Activated CD8-positive, alpha-beta memory T cell treated with anti-CD3 and anti-CD28 coated beads, Interleukin-2, amount 10 ng/mL, durations not matched to agents 7 days and 5 days (primary cell): ENCODE measurements at regions of chr14 and their contacts with region 1.

Region 1: GRCh38 chr14:68843471-68844209 is 50.8 kb upstream of the ZFP36L1 start:
- DNase-seq: peak; percentile 81
- ATAC-seq: peak; percentile 89
- H3K4me3 Mint-ChIP-seq: no peak overlapping the region
- H3K27ac Mint-ChIP-seq: no peak overlapping the region
- H3K4me1 Mint-ChIP-seq: peaks cover 15% of the 10 kb centered on the region
- H3K27me3 Mint-ChIP-seq: peaks cover 13% of the 10 kb centered on the region

Region 2: GRCh38 chr14:67934008-67934481 is 909.6 kb before region 1 on chr14:
- CTCF ChIA-PET with region 1: interaction called, 12 read pairs
- DNase-seq: no peak
- ATAC-seq: peak; percentile 70
- H3K4me3 Mint-ChIP-seq: no peak overlapping the region
- H3K27ac Mint-ChIP-seq: no peak overlapping the region
- H3K4me1 Mint-ChIP-seq: peaks cover 2% of the 10 kb centered on the region
- H3K27me3 Mint-ChIP-seq: no peaks in the 10 kb centered on the region

Region 3: GRCh38 chr14:68248481-68249255 is 595.0 kb before region 1 on chr14:
- CTCF ChIA-PET with region 1: interaction called, 21 read pairs
- DNase-seq: no peak
- ATAC-seq: peak; percentile 36
- H3K4me3 Mint-ChIP-seq: no peak overlapping the region
- H3K27ac Mint-ChIP-seq: no peak overlapping the region
- H3K4me1 Mint-ChIP-seq: peaks cover 4% of the 10 kb centered on the region
- H3K27me3 Mint-ChIP-seq: no peaks in the 10 kb centered on the region

Region 4: DNA sequence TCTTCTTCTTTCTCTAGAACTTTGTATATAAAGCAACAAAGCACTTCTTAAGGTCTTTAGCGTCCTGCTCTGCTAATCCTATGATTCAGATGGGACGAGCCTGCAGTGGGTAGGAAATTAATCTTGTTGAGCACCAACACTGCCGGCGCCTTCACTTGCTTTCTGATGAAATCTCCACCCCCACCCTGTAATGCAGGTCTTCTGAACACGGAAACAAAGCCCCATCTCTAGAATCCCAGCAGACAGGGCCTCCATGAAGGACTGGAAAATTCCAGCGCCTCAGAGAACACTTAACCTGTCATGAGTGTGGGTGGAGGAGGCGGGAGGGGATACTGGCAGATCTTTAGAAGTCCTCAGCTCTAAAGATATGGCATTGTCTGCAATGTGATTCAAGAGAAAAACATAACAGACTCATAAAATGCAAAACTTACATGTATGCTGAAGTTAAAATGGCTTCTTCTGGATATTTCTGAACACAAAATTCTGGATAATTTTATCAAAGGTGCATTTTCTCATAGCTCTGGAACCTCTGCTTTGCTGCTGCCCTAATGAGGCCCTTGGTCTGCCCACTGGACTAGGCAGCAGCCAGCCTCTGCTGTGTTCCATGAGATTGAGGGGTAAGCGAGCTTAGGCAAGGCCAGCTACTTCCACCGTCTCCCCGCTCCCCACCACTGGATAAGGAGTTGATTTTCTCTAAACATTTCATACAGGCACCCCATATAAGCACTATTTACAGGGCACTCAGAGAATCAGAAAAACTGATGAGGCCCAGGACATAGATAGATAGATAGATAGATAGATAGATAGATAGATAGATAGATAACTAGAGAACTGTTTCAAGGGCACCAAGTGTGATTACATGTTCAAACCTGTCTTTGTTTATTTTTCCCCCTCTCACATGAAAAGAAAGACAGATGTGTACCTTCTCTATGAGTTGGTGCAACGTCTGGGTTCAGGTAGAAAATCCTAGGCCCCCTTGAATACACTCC is 93.9 kb before region 1 on chr14:
- CTCF ChIA-PET with region 1: no interaction called
- DNase-seq: no peak
- ATAC-seq: no peak
- H3K4me3 Mint-ChIP-seq: no peak overlapping the region
- H3K27ac Mint-ChIP-seq: no peak overlapping the region
- H3K4me1 Mint-ChIP-seq: no peaks in the 10 kb centered on the region
- H3K27me3 Mint-ChIP-seq: no peaks in the 10 kb centered on the region

Region 5: DNA sequence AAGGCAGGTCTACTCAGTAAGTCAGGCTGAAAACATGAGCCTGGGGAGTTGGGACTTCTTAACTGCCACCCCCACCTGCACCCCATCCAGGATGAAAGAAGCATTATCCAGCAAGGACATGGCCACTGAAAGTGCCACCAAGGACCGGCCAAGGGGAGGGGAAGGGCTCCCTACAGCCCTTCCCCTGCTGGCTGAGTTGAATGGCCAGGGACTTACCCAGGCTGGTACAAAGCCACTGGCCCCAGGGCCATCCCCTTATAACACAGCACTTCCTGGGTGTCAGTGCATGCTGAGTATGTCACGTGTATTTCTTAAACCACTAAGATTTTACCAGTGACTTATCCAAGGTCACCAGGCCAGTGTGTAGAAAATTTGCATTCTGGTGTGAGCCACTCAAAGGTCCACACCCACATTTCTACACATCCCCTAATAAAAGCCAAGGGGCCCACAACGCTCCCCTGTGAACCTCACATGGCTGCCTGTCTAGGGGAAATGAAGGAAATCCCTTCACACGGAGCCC is 21.4 kb before region 1 on chr14:
- CTCF ChIA-PET with region 1: interaction called, 30 read pairs
- DNase-seq: no peak
- ATAC-seq: peak; percentile 42
- H3K4me3 Mint-ChIP-seq: no peak overlapping the region
- H3K27ac Mint-ChIP-seq: peak overlapping the region; percentile 37
- H3K4me1 Mint-ChIP-seq: peaks cover 20% of the 10 kb centered on the region
- H3K27me3 Mint-ChIP-seq: no peaks in the 10 kb centered on the region

Region 6: DNA sequence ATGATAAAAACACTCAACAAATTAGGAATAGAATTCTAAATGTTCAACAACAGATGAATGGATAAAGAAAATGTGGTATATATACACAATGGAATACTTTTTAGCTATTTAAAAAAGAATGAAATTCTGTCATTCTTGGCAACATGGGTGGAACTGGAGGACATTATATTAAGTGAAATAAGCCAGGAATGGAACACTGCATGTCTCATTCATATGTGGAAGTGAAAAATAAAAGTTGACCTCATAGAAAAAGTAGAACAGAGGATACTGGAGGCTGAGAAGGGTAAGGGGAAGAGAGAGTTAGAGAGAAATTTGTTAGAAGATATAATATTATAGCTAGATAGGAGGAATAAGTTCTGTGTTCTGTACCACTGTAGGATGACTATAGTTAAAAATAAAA is 14.9 kb before region 1 on chr14:
- CTCF ChIA-PET with region 1: interaction called, 27 read pairs
- DNase-seq: no peak
- ATAC-seq: no peak
- H3K4me3 Mint-ChIP-seq: no peak overlapping the region
- H3K27ac Mint-ChIP-seq: no peak overlapping the region
- H3K4me1 Mint-ChIP-seq: no peaks in the 10 kb centered on the region
- H3K27me3 Mint-ChIP-seq: peaks cover 12% of the 10 kb centered on the region

Region 7: GRCh38 chr14:68862954-68863594 is 19.4 kb after region 1 on chr14:
- CTCF ChIA-PET with region 1: interaction called, 15 read pairs
- DNase-seq: peak; percentile 82
- ATAC-seq: peak; percentile 36
- H3K4me3 Mint-ChIP-seq: no peak overlapping the region
- H3K27ac Mint-ChIP-seq: no peak overlapping the region
- H3K4me1 Mint-ChIP-seq: no peaks in the 10 kb centered on the region
- H3K27me3 Mint-ChIP-seq: no peaks in the 10 kb centered on the region

Region 8: DNA sequence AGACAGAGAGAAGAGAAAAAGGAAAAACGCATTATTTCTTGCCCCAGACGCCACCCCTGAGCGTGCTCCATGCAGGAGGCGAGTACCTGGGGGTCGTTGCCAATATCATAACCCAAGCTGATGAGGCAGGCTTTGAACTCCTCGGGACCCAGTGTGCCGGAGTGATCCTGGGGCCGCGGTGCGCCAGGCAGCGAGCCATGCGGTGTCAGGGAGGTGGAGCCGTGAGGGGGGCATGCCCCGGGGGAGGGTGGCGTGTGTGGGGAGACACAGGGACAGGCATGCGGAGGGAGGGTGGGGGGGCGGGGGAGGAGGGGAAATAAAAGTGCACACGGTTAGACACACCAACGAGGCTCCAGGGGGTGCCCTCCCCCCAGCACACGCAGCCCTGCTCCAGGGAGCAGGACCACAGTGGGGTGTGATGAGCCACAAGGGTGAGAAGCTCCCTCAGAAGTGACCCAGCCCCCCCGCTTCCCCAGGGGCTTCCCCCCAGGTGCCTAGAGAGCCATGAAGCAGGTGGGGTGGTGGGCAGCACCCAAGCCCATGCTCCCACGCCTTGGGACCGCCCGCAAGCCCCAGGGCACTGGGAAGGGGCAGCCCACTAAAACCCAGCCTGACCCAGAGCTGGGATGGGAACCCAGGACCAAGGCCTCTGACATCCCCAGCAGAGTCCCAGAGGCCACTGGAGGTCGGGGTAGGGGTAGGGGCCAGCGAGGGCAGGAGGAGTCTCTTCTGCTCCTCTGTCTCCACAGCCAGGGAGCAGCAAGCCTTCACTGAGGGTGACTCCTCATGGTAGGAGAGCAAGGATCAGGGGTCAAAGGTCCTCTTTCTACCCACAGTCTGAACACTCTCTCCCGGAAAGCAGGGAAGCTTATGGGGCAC is 35.5 kb after region 1 on chr14:
- CTCF ChIA-PET with region 1: no interaction called
- DNase-seq: no peak
- ATAC-seq: peak; percentile 20
- H3K4me3 Mint-ChIP-seq: no peak overlapping the region
- H3K27ac Mint-ChIP-seq: no peak overlapping the region
- H3K4me1 Mint-ChIP-seq: no peaks in the 10 kb centered on the region
- H3K27me3 Mint-ChIP-seq: no peaks in the 10 kb centered on the region